ENCODE measurements at regions of chr3 and their contacts with region 1.

Region 1: GRCh38 chr3:11803977-11804892 is 42.5 kb downstream of the TAMM41 start:
- DNase-seq: peak; percentile 62
- ATAC-seq: peak; percentile 89
- H3K4me3 Mint-ChIP-seq: no peak overlapping the region
- H3K27ac Mint-ChIP-seq: no peak overlapping the region
- H3K4me1 Mint-ChIP-seq: peaks cover 8% of the 10 kb centered on the region
- H3K27me3 Mint-ChIP-seq: no peaks in the 10 kb centered on the region

Region 2: GRCh38 chr3:11785024-11785377 is 19.2 kb before region 1 on chr3:
- CTCF ChIA-PET with region 1: interaction called, 10 read pairs
- POLR2A ChIA-PET with region 1: no interaction called
- DNase-seq: peak; percentile 58
- ATAC-seq: peak; percentile 92
- H3K4me3 Mint-ChIP-seq: no peak overlapping the region
- H3K27ac Mint-ChIP-seq: peak overlapping the region; percentile 94
- H3K4me1 Mint-ChIP-seq: peaks cover 26% of the 10 kb centered on the region
- H3K27me3 Mint-ChIP-seq: no peaks in the 10 kb centered on the region

Region 3: DNA sequence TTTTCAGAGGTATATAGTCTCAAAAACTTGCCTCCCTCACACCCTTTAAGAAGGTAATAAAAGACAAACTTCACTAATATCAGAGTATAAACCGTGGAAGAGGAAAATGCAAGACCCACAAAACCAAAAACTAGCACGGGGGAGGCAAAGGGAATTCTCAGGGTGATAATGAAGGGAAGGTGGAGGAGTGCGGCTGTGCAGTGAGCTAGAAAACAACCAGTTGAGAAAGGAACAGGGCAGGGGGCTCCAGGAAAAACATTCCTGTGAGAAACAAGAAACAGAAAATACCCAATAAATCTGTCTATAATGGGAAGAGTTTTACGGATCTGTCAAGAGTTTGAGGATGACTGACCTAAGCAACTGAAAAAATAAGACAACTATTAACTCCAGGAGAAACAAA is 10.9 kb after region 1 on chr3:
- CTCF ChIA-PET with region 1: interaction called, 18 read pairs
- POLR2A ChIA-PET with region 1: no interaction called
- DNase-seq: no peak
- ATAC-seq: no peak
- H3K4me3 Mint-ChIP-seq: no peak overlapping the region
- H3K27ac Mint-ChIP-seq: no peak overlapping the region
- H3K4me1 Mint-ChIP-seq: peaks cover 4% of the 10 kb centered on the region
- H3K27me3 Mint-ChIP-seq: no peaks in the 10 kb centered on the region